ENCODE measurements at regions of chr12 and their contacts with region 1.

Region 1: DNA sequence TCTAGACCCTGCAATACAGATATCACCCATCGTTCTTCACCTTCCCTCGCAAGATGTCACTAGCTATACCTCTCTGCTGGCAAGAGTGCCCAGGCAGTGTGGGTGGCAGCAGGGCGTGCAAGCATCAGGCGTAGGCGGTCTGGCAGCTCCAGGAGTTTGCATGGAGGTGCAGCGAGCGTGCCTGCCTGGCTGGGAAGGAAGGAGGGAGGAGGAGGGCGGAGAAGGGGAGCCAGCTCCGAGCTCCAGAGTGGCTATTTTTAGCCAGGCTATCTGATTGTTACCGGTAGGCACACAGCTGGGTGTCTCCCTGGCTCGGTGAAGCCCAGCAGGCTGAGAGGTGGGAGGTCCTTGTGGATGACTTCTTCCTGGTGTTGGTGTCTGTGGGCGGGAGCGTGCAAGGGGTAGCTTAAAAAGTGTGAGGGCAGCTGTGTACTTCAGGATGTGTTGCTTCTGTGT is 6.2 kb downstream of the FOXJ2 start:
- DNase-seq: peak; percentile 58 to 84
- ATAC-seq: peak; percentile 86 to 90 (median 88)
- H3K4me3 ChIP-seq: peak overlapping the region; percentile 47
- H3K27ac ChIP-seq: peak overlapping the region; percentile 99
- H3K4me1 ChIP-seq: peaks cover 61% of the 10 kb centered on the region
- H3K27me3 ChIP-seq: no peaks in the 10 kb centered on the region
- CTCF ChIP-seq: no peak

Region 2: DNA sequence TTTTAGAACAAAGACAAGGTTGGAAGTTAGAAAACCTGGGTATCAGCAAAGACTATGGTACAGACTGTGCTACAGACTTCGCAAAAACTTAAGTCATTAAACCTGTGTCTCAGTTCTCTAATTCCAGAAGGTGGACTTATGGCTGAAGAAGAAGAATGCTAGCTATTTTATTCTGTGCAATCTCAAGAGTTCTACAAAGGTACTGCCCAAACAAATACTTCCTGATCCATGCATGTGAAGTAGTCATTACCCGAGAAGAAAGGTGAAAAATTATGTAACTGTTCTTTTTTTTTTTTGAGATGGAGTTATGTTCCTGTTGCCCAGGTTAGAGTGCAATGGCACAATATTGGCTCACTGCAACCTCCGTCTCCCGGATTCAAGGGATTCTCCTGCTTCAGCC is 57.2 kb before region 1 on chr12:
- intact Hi-C with region 1: no loop called
- DNase-seq: no peak
- ATAC-seq: no peak
- H3K4me3 ChIP-seq: no peak overlapping the region
- H3K27ac ChIP-seq: no peak overlapping the region
- H3K4me1 ChIP-seq: no peaks in the 10 kb centered on the region
- H3K27me3 ChIP-seq: no peaks in the 10 kb centered on the region
- CTCF ChIP-seq: no peak

Region 3: DNA sequence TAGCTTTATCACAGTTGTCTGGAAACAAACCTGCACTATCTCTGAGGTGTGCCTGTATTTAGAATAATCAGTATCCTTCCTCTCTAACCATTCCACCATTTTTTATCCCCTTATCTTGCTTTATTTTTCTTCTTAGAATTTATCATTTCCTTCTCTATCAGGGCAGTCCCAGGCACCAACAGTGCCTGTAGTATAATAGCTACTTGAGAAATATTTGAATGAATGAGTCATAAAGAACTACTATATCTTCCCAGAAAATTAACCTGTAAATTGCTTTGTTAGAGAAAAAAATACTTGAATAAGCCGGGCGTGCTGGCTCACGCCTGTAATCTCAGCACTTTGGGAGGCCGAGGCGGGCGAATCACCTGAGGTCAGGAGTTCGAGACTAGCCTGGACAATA is 27.4 kb before region 1 on chr12:
- intact Hi-C with region 1: no loop called
- DNase-seq: no peak
- ATAC-seq: no peak
- H3K4me3 ChIP-seq: no peak overlapping the region
- H3K27ac ChIP-seq: no peak overlapping the region
- H3K4me1 ChIP-seq: no peaks in the 10 kb centered on the region
- H3K27me3 ChIP-seq: peaks cover 0 to 6% (median 2%) of the 10 kb centered on the region in 3 donors
- CTCF ChIP-seq: no peak

Region 4: GRCh38 chr12:8081251-8081920 is 42.7 kb after region 1 on chr12:
- intact Hi-C with region 1: loop called (anchors 5 kb)
- DNase-seq: peak in 1 of 2 donors; percentile 59
- ATAC-seq: peak; percentile 57 to 74 (median 60)
- H3K4me3 ChIP-seq: peak overlapping the region; percentile 98
- H3K27ac ChIP-seq: peak overlapping the region; percentile 97
- H3K4me1 ChIP-seq: peaks cover 28% of the 10 kb centered on the region
- H3K27me3 ChIP-seq: no peaks in the 10 kb centered on the region
- CTCF ChIP-seq: no peak

Measured in psoas muscle (tissue), 8 donors.